ENCODE measurements at regions of chr17 and their contacts with region 1.

Region 1: GRCh38 chr17:58517734-58518609 is 3.5 kb upstream of the MTMR4 start:
- DNase-seq: peak; percentile 100
- H3K4me3 ChIP-seq: peak overlapping the region; percentile 76
- H3K4me3 Mint-ChIP-seq: peak overlapping the region; percentile 96
- H3K27ac Mint-ChIP-seq: peak overlapping the region; percentile 95
- H3K4me1 ChIP-seq: 0 out of 2 replicates have a peak, but pooled peaks cover 13% of the 10 kb centered on the region
- H3K4me1 Mint-ChIP-seq: peaks cover 26% of the 10 kb centered on the region
- H3K27me3 ChIP-seq: no peaks in the 10 kb centered on the region
- H3K27me3 Mint-ChIP-seq: no peaks in the 10 kb centered on the region
- CTCF ChIP-seq: no peak

Region 2: DNA sequence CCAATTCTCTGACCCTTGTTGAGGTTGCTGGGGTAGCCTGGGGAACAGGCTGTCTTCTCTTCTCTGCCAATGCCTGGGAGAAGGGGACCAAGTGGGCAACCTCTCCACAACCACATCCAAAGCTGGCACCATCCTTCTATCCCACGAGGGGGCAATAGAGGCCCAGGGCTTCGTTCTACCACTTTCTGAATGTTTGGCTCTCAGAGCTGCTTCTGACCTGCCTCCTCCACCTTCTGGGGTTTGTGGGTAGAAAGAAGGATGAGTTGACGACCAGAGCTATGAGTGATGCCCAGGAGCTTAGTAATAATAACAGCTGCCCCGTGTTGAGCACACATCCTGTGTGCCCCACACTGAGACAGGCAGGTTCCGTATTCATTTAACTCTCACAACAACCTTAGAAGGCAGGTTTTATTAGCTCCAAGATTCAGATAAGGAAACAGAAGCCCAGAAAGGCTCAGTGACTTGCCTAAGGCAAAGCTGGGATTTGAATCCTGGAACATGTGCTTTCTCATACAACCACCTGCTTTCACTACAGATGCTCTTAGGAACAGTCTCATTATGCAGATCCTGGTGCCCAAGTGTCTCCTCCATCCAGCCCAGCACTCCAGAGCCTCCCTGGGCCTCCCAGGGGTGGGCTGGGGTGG is 200.4 kb before region 1 on chr17:
- CTCF ChIA-PET with region 1: interaction called, 4 read pairs
- POLR2A ChIA-PET with region 1: no interaction called
- intact Hi-C with region 1: loop called (anchors 1 kb)
- DNase-seq: peak; percentile 77 to 83
- H3K4me3 ChIP-seq: no peak overlapping the region
- H3K4me3 Mint-ChIP-seq: no peak overlapping the region
- H3K27ac Mint-ChIP-seq: peak overlapping the region; percentile 8
- H3K4me1 ChIP-seq: peaks cover 16% of the 10 kb centered on the region
- H3K4me1 Mint-ChIP-seq: peaks cover 20% of the 10 kb centered on the region
- H3K27me3 ChIP-seq: no peaks in the 10 kb centered on the region
- H3K27me3 Mint-ChIP-seq: no peaks in the 10 kb centered on the region
- CTCF ChIP-seq: peak; percentile 86 to 91

Region 3: DNA sequence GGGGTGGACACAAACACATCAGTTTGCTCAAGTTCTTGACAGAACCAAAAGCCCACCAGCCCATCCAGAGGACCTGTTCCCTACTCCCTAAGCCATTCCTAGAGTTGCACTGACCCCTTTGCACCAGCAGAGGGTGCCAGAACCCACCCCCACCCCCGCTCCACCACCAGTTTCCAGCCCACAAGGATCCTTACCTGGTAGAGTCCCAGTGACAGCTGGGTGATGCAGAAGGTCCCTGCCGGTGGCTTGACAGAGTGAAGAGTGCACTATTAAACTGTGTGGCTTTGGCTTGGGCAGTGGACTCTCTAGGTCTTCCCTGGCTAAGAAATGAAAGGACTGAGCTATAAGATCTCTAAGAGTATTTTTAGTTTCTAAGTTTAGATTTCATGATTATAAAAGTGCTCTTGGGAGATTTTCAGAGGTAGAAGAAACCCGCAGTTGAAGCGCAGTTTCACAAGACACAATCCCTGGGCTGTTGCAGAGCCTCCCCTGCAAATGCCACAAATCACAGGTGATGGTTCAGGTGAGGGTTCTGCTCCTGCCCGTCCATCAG is 69.8 kb after region 1 on chr17:
- CTCF ChIA-PET with region 1: interaction called, 5 read pairs
- POLR2A ChIA-PET with region 1: no interaction called
- intact Hi-C with region 1: loop called (anchors 1 kb)
- DNase-seq: peak; percentile 74 to 79
- H3K4me3 ChIP-seq: no peak overlapping the region
- H3K4me3 Mint-ChIP-seq: no peak overlapping the region
- H3K27ac Mint-ChIP-seq: no peak overlapping the region
- H3K4me1 ChIP-seq: no peaks in the 10 kb centered on the region
- H3K4me1 Mint-ChIP-seq: no peaks in the 10 kb centered on the region
- H3K27me3 ChIP-seq: no peaks in the 10 kb centered on the region
- H3K27me3 Mint-ChIP-seq: peaks cover 5% of the 10 kb centered on the region
- CTCF ChIP-seq: peak; percentile 93 to 98

Region 4: GRCh38 chr17:58658804-58659713 is 141.1 kb after region 1 on chr17:
- CTCF ChIA-PET with region 1: interaction called, 3 read pairs
- POLR2A ChIA-PET with region 1: no interaction called
- intact Hi-C with region 1: loop called (anchors 1 kb)
- DNase-seq: peak; percentile 90 to 96
- H3K4me3 ChIP-seq: peak overlapping the region; percentile 43
- H3K4me3 Mint-ChIP-seq: peak overlapping the region; percentile 70
- H3K27ac Mint-ChIP-seq: peak overlapping the region; percentile 99
- H3K4me1 ChIP-seq: no peaks in the 10 kb centered on the region
- H3K4me1 Mint-ChIP-seq: peaks cover 11% of the 10 kb centered on the region
- H3K27me3 ChIP-seq: no peaks in the 10 kb centered on the region
- H3K27me3 Mint-ChIP-seq: peaks cover 3% of the 10 kb centered on the region
- CTCF ChIP-seq: no peak

Region 5: GRCh38 chr17:58692239-58693055 is 174.5 kb after region 1 on chr17 and contains the start of gene RAD51C:
- CTCF ChIA-PET with region 1: no interaction called
- POLR2A ChIA-PET with region 1: no interaction called
- intact Hi-C with region 1: loop called (anchors 1 kb)
- DNase-seq: peak; percentile 87 to 90
- H3K4me3 ChIP-seq: peak within 1 kb of the TSS; percentile 47
- H3K4me3 Mint-ChIP-seq: peak within 1 kb of the TSS; percentile 91
- H3K27ac Mint-ChIP-seq: peak within 1 kb of the TSS; percentile 86
- H3K4me1 ChIP-seq: peaks cover 18% of the 10 kb centered on the region
- H3K4me1 Mint-ChIP-seq: peaks cover 11% of the 10 kb centered on the region
- H3K27me3 ChIP-seq: no peaks in the 10 kb centered on the region
- H3K27me3 Mint-ChIP-seq: no peaks in the 10 kb centered on the region
- CTCF ChIP-seq: no peak
- total RNA-seq, gene RAD51C: 59.0 and 61.2 TPM in 2 replicates

Region 6: GRCh38 chr17:59106463-59107305 is 588.7 kb after region 1 on chr17 and contains the start of gene TRIM37:
- CTCF ChIA-PET with region 1: no interaction called
- POLR2A ChIA-PET with region 1: interaction called, 4 read pairs
- intact Hi-C with region 1: loop called (anchors 5 kb)
- DNase-seq: peak; percentile 99 to 100
- H3K4me3 ChIP-seq: peak within 1 kb of the TSS; percentile 90
- H3K4me3 Mint-ChIP-seq: peak within 1 kb of the TSS; percentile 98
- H3K27ac Mint-ChIP-seq: peak within 1 kb of the TSS; percentile 96
- H3K4me1 ChIP-seq: peaks cover 6% of the 10 kb centered on the region; the same call in 1 of the 2 replicates
- H3K4me1 Mint-ChIP-seq: peaks cover 9% of the 10 kb centered on the region
- H3K27me3 ChIP-seq: no peaks in the 10 kb centered on the region
- H3K27me3 Mint-ChIP-seq: no peaks in the 10 kb centered on the region
- CTCF ChIP-seq: peak in 1 of 2 experiments; percentile 13
- total RNA-seq, gene TRIM37: 37.7 and 44.4 TPM in 2 replicates

Region 7: DNA sequence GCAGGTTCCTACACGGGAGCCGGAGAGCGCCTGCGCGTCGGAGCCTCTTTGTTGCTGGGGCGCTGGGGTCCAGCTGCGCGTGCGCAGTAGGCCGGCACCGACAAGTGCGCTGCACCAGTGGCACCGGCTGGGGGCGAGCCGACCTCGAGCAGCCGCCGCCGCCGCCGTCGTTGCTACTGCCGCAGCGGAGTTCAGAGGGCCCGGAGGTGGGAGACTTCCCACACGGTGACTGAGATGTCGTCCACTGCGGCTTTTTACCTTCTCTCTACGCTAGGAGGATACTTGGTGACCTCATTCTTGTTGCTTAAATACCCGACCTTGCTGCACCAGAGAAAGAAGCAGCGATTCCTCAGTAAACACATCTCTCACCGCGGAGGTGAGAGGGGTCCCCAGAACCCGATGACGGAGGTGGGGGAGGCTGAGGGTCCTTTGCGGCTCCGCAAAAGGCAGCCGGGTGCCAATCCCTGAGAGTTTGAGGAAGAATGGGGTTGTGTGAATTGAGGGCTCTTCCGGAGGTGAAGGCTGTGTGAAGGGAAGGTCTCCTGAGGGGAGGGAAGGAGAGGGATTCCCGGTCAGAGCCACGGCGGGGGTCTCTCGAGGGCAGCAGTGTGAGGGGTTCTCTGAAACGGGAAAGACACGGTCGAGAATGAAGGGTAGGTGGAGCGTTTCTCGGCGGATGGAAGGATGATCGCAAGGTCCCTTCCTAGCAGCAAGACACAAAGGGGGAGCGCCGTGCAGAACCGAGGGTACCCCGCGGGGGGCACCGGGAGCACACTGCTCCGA is 702.6 kb after region 1 on chr17 and contains the start of gene GDPD1:
- CTCF ChIA-PET with region 1: no interaction called
- POLR2A ChIA-PET with region 1: no interaction called
- intact Hi-C with region 1: loop called (anchors 10 kb)
- DNase-seq: peak; percentile 95 to 99
- H3K4me3 ChIP-seq: peak within 1 kb of the TSS; percentile 51
- H3K4me3 Mint-ChIP-seq: peak within 1 kb of the TSS; percentile 95
- H3K27ac Mint-ChIP-seq: peak within 1 kb of the TSS; percentile 88
- H3K4me1 ChIP-seq: no peaks in the 10 kb centered on the region
- H3K4me1 Mint-ChIP-seq: no peaks in the 10 kb centered on the region
- H3K27me3 ChIP-seq: no peaks in the 10 kb centered on the region
- H3K27me3 Mint-ChIP-seq: no peaks in the 10 kb centered on the region
- CTCF ChIP-seq: peak; percentile 53 to 54
- total RNA-seq, gene GDPD1: 1.2 and 2.9 TPM in 2 replicates